ENCODE measurements at regions of chr3 and their contacts with region 1.

Region 1: DNA sequence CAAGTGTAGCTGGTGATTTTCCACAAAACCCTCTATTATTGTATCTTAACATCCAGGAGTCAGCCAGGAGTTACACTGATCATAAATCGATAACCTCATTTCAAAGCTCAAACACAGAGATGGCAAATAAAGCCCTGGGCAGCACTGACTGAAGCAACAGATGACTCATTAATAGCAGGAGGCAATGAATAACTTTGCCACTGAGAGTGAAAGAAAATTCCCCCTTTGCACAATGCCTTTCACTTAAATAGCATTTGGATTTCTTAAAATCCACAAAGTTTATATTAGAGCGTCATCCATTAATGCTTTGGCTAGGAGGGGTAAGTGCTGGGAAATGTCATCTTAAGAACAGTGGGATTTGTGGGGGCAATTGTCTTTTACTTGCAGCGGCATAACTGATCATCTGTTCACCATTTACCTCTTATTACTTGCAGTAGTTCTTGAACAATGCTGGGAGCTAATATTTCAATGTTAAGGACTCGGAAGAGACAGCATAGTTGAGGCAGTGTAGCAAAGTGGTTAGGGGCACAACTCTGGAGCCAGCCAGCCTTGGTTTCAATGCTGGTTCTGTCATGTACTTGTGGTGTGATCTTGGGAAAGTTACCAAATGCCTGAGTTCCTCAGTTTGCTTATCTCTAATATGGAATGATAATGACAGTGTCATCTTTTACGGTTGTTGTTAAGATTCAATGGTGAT is 630.4 kb upstream of the TBL1XR1 start:
- DNase-seq: no peak
- H3K4me3 ChIP-seq: no peak overlapping the region
- H3K27ac ChIP-seq: peak overlapping the region in 1 of 2 donors; percentile 18
- H3K4me1 ChIP-seq: no peaks in the 10 kb centered on the region
- H3K27me3 ChIP-seq: no peaks in the 10 kb centered on the region
- CTCF ChIP-seq: no peak
- POLR2A ChIP-seq: no peak

Region 2: DNA sequence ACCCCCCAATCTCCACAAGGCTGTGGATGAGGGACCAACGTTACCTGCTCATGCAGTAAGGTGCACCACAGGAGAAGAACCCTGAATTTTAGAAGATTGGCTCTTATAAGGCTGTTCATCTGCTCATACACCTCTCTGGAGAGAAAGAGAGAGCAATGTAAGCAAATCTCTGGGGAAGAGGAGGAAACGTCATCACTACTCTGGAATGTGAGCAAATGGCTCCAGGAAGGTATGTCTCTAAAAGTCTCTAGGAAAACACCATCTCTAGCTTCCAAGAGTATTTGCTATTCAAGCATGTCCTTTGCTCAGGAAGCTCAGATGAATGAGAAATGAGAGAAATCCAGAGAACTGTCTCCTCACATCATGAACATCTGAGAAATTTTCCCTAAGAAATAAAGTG is 865.7 kb before region 1 on chr3:
- intact Hi-C with region 1: no loop called
- DNase-seq: no peak
- H3K4me3 ChIP-seq: no peak overlapping the region
- H3K27ac ChIP-seq: no peak overlapping the region
- H3K4me1 ChIP-seq: no peaks in the 10 kb centered on the region
- H3K27me3 ChIP-seq: no peaks in the 10 kb centered on the region
- CTCF ChIP-seq: no peak
- POLR2A ChIP-seq: no peak

Region 3: DNA sequence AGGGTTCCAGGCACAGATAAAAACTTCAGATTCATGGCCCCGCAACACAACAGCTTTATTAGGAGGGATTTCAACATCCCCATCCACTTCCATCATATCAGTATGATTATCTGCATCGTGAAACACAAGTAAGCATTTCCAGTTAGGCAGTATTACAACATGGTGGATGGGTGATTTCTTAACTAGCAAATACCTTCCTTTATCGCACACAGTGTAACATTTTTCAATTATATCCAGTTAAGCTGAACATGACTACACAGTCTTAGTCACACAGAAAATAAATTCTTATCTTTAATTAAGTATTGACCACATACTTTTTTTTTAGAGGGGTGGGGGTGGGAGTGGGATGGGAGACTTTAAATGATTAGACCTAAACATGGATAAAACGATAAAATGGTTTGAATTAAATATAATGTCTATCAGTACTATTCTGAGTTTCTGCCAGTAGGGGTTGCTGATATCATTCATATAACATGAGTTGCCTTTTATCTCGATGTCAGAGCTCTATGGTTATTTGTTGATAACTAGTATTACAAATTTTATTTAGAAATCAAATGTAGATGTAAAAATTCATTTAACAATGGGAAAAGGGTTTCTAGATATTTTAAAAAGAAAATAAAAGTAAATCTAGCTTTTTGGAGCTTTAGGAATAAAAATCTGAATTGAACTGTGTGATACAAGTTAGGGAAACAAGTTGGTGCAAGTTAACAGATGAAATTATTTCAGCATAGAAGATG is 777.0 kb before region 1 on chr3:
- intact Hi-C with region 1: loop called (anchors 10 kb)
- DNase-seq: no peak
- H3K4me3 ChIP-seq: no peak overlapping the region
- H3K27ac ChIP-seq: no peak overlapping the region
- H3K4me1 ChIP-seq: peaks cover 10% of the 10 kb centered on the region
- H3K27me3 ChIP-seq: no peaks in the 10 kb centered on the region
- CTCF ChIP-seq: peak; percentile 22 to 79 (median 66)
- POLR2A ChIP-seq: no peak

Region 4: GRCh38 chr3:177468331-177468730 is 359.3 kb before region 1 on chr3:
- intact Hi-C with region 1: loop called (anchors 10 kb)
- DNase-seq: no peak
- H3K4me3 ChIP-seq: no peak overlapping the region
- H3K27ac ChIP-seq: peak overlapping the region in 1 of 2 donors; percentile 18
- H3K4me1 ChIP-seq: peaks cover 13% of the 10 kb centered on the region
- H3K27me3 ChIP-seq: no peaks in the 10 kb centered on the region
- CTCF ChIP-seq: no peak
- POLR2A ChIP-seq: no peak

Region 5: DNA sequence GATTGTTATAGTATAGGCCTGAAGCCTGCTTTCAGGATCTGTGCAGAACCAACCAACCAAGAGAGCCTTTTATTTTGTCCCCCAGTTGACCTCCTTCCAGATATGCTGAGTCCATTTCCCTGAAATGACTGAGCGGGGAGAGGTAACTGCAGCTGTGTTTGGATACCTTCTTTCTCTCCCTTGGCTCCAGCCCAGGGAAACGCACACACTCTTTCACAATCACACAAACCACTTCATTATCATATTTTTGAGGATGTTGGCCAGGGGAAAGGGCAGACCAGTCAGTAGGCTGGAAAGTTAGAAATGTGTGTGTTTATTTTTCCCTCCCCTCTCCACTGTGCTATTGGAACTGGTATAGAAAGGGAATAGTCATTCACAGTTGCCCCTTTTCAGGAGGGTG is 212.6 kb before region 1 on chr3:
- intact Hi-C with region 1: loop called (anchors 10 kb)
- DNase-seq: peak; percentile 79
- H3K4me3 ChIP-seq: no peak overlapping the region
- H3K27ac ChIP-seq: peak overlapping the region in 1 of 2 donors; percentile 89
- H3K4me1 ChIP-seq: peaks cover 21% of the 10 kb centered on the region
- H3K27me3 ChIP-seq: no peaks in the 10 kb centered on the region
- CTCF ChIP-seq: no peak
- POLR2A ChIP-seq: no peak

Region 6: GRCh38 chr3:177781686-177782161 is 45.9 kb before region 1 on chr3:
- intact Hi-C with region 1: loop called (anchors 5 kb)
- DNase-seq: no peak
- H3K4me3 ChIP-seq: no peak overlapping the region
- H3K27ac ChIP-seq: peak overlapping the region; percentile 50 to 52
- H3K4me1 ChIP-seq: no peaks in the 10 kb centered on the region
- H3K27me3 ChIP-seq: no peaks in the 10 kb centered on the region
- CTCF ChIP-seq: no peak
- POLR2A ChIP-seq: no peak

Measured in prostate gland (tissue), 2 donors.